Activated CD4-positive, alpha-beta memory T cell treated with anti-CD3 and anti-CD28 coated beads for 36 hours (primary cell): ENCODE measurements at regions of chr22 and their contacts with region 1.

Region 1: DNA sequence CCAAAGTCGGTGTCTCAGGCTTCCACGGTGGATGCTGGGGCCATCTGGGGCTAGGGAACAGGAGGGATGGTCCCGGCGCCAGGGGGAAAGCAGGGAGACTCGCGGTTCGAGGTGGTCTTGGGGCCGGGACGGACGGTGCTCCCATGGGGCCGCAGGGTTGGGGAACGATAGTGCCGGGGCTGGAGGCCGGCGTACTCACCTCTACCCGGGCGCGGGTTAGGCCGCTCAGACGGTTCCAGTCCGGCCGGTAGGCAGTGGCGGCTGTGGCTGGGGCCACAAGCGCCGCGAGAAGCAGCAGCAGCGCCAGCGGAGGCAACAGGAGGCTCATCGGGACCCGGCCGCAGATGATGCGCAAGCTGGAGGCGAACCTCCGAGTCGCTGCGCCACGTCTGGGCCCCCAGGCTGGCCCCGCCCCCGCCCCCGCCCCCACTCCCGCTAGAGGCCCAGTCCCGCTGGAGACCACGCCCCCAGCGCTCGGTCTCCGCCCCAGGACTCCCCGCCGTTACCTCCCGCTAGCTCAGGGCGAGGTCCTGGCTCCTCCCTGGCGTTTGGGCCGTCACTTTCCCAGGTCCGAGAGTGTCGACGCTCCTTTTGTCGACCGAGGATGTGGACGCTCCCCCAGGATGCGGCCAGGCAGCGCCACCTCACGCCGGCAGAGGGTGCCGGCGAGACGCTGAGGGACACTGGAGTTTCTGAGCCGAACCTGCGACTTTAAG is at the start of gene SELENOM:
- DNase-seq: peak; percentile 94
- H3K4me3 Mint-ChIP-seq: peak within 1 kb of the TSS; percentile 80
- H3K27ac Mint-ChIP-seq: peak within 1 kb of the TSS; percentile 70
- H3K4me1 Mint-ChIP-seq: peaks cover 22% of the 10 kb centered on the region
- H3K27me3 Mint-ChIP-seq: no peaks in the 10 kb centered on the region
- total RNA-seq, gene SELENOM: 14.1 to 14.3 TPM

Region 2: GRCh38 chr22:30628491-30628890 is 478.8 kb before region 1 on chr22:
- CTCF ChIA-PET with region 1: no interaction called
- POLR2A ChIA-PET with region 1: no interaction called
- intact Hi-C with region 1: no loop called
- DNase-seq: no peak
- H3K4me3 Mint-ChIP-seq: no peak overlapping the region
- H3K27ac Mint-ChIP-seq: no peak overlapping the region
- H3K4me1 Mint-ChIP-seq: no peaks in the 10 kb centered on the region
- H3K27me3 Mint-ChIP-seq: no peaks in the 10 kb centered on the region

Region 3: GRCh38 chr22:30979932-30980331 is 127.4 kb before region 1 on chr22:
- CTCF ChIA-PET with region 1: no interaction called
- POLR2A ChIA-PET with region 1: no interaction called
- intact Hi-C with region 1: no loop called
- DNase-seq: no peak
- H3K4me3 Mint-ChIP-seq: no peak overlapping the region
- H3K27ac Mint-ChIP-seq: no peak overlapping the region
- H3K4me1 Mint-ChIP-seq: peaks cover 3% of the 10 kb centered on the region
- H3K27me3 Mint-ChIP-seq: no peaks in the 10 kb centered on the region

Region 4: DNA sequence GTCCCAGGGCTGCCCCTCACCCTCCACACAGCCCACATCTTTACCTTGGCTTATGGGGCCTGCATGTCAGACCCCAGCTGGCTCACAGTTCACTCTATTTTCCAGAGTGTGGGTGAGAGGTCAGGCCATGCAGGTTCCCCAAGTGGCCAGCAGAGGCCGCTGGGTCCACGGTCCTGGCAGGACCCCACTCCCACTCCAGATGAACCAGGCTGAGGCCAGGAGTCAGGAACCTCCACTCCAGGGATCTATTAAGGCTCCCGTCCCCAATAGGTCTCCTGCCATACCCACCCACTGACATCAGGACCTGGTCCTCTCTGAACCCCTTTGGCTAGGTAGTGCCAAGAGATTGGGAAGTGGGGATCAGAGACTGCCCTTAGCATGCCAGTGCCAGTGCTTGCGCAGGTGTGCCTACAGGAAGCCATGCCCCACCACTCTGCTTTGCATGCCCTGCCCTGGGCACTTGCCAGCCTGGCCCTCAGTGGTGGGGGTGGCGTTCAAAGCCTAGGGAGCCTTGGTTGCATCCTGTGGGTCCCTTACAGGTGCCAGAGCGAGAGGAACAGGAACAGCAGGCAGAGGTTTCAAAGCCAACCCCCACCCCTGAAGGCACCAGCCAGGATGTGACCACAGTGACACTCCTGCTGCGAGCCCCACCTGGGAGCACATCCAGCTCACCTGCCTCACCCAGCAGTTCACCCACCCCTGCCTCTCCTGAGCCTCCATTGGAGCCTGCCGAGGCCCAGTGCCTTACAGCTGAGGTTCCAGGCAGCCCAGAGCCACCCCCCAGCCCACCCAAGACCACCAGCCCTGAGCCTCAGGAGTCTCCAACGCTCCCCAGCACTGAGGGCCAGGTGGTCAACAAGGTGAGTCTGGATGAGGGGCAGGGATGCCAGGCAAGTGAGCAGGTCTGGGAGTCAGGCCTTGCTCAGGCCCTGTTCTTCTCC is 17.9 kb before region 1 on chr22:
- CTCF ChIA-PET with region 1: interaction called, 27 read pairs
- POLR2A ChIA-PET with region 1: interaction called, 3 read pairs
- intact Hi-C with region 1: loop called (anchors 2 kb)
- DNase-seq: peak; percentile 52
- H3K4me3 Mint-ChIP-seq: no peak overlapping the region
- H3K27ac Mint-ChIP-seq: no peak overlapping the region
- H3K4me1 Mint-ChIP-seq: no peaks in the 10 kb centered on the region
- H3K27me3 Mint-ChIP-seq: no peaks in the 10 kb centered on the region

Region 5: DNA sequence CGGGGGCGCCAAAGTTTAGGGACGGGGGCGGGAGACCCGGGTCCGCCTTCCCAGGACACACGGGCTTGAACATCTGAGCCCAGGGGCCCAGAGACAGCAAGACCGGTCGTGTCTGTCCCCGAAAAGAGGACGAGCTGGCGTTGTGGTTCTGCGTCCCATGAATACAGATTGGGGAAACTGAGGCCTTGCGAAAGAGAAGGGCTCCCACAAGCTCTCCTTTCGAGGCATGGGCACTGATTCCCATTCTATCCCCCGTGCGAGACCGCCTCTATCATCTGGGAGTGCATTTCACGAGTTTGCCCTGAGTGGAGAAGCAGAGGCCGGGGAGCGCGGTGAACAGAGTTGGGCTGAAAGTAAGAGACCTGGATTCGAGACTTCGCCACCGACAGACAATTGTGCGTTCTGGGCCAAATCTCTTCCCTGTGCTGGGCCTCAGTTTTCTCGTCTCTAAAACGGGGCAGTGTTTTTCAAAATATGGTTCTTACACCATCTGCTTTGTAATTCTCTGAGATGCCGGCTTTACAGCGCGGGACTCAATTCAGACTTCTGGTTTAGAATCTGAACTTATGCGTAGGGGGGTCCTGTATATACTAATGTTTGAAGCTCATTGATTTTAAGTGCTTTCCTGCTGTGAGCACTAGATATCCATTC is 53.1 kb after region 1 on chr22:
- CTCF ChIA-PET with region 1: interaction called, 11 read pairs
- POLR2A ChIA-PET with region 1: no interaction called
- intact Hi-C with region 1: no loop called
- DNase-seq: peak; percentile 29
- H3K4me3 Mint-ChIP-seq: peak overlapping the region; percentile 99
- H3K27ac Mint-ChIP-seq: peak overlapping the region; percentile 97
- H3K4me1 Mint-ChIP-seq: peaks cover 34% of the 10 kb centered on the region
- H3K27me3 Mint-ChIP-seq: no peaks in the 10 kb centered on the region

Region 6: DNA sequence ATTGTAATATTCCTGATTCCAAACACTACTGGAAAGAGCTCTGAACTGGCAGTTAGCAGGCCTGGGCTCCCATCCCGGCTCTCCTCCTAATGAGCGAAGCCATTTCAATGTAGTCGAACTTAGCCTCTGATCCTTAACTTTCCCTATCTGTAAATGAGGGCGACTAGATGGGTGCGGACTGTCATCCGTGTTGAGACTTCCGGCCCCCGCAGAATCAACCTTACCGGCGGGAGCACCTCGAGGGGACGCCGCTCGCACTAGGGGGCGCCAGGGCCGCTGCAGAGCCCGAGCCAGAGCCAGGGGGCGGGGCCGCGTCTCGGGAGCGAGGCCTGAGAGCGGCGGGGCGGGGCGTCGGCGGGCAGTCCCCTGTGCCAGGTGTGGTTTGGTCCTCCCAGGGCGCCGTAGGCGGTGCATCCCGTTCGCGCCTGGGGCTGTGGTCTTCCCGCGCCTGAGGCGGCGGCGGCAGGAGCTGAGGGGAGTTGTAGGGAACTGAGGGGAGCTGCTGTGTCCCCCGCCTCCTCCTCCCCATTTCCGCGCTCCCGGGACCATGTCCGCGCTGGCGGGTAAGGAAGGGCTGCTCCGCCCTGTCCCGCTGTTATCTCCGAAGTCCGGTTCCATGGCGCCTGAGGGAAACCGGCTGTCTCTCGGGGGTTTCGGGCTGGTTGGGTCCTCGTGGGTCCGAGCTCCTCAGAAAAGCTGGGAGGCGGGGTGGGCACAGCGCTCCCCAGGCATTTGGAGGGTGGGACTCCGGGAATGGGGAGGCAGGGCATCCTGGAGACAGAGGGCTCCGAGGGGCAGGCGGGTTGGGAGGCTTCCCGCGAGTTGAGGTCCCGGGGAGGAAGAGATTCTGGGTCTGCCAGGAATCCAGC is 104.8 kb after region 1 on chr22 and contains the start of gene LIMK2:
- CTCF ChIA-PET with region 1: interaction called, 15 read pairs
- POLR2A ChIA-PET with region 1: interaction called, 3 read pairs
- intact Hi-C with region 1: loop called (anchors 5 kb)
- DNase-seq: peak; percentile 98
- H3K4me3 Mint-ChIP-seq: peak within 1 kb of the TSS; percentile 83
- H3K27ac Mint-ChIP-seq: peak within 1 kb of the TSS; percentile 87
- H3K4me1 Mint-ChIP-seq: peaks cover 53% of the 10 kb centered on the region
- H3K27me3 Mint-ChIP-seq: no peaks in the 10 kb centered on the region
- total RNA-seq, gene LIMK2: 42.0 to 44.7 TPM